ENCODE measurements at regions of chr7 and their contacts with region 1.

Region 1: DNA sequence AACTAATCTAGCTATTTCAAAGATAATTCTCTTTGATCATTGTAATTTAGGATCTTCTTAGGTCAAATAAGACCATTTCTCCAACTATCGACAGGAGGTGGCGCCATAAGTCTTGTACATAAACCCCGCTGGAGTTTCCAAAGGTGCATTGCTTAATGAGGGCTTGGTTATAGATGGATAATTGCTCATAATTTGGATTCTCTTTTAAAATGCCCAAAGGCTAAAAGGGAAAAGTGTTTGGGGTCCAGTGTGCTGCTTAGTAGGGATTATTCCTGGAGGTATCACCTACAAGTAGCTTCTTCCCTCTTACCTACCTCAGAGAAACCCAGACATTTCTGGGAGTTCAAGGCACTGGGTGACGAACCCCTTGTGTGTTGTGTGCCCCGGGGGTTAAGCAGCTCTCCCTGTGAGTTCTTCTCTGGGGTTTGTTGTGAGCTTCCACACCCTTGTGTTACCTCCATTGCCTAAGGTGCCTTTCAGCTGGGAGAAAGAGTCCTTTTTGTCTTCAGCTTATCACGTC is 75.2 kb downstream of the PAXIP1 start:
- DNase-seq: peak; percentile 53 to 90 (median 80)
- ATAC-seq: peak; percentile 57
- H3K4me3 ChIP-seq: peak overlapping the region; percentile 74 to 78
- H3K4me3 Mint-ChIP-seq: peak overlapping the region; percentile 95
- H3K27ac ChIP-seq: peak overlapping the region; percentile 84 to 92
- H3K27ac Mint-ChIP-seq: peak overlapping the region; percentile 99
- H3K4me1 ChIP-seq: peaks cover 15% of the 10 kb centered on the region
- H3K4me1 Mint-ChIP-seq: peaks cover 35% of the 10 kb centered on the region
- H3K27me3 ChIP-seq: no peaks in the 10 kb centered on the region
- H3K27me3 Mint-ChIP-seq: no peaks in the 10 kb centered on the region
- CTCF ChIP-seq: peak; percentile 79

Region 2: DNA sequence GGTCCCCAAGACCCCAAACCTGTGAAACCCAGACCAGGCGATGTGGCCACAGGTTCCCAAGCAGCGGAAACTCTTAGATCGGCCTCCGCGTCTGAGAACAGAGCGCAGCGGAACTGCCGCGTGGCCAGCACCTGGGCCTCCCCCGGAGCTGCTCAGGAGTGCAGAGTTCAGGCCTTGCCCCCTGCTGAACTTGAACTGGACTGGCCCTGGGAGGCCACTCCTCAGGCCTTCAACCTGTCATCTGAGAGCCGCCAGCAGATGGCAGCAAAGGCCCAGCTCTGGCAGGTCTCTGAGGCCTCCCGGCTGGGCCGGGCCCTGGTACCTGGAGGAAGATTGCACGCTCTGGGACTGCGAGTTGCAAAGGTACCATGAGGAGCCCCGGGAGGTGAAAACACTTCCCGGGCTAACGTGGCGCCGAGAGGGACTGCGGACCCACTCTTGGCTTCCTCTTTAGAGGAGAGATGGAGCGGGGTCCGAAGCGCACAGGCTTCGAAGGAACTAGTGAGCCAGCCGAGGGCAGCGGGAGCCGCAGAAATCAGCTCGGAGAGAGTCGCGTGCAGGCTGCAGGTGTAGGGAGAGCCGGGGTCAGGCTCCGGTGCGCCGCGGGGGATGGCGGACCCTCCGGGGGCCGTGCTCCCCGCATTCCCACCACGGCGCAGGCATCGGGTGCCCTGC is 13.9 kb before region 1 on chr7:
- CTCF ChIA-PET with region 1: interaction called, 40 read pairs
- POLR2A ChIA-PET with region 1: interaction called, 4 read pairs
- intact Hi-C with region 1: loop called in 1 of 2 experiments (anchors 1 kb)
- DNase-seq: peak; percentile 77 to 93 (median 86)
- ATAC-seq: peak; percentile 95
- H3K4me3 ChIP-seq: peak overlapping the region; percentile 34 to 37
- H3K4me3 Mint-ChIP-seq: peak overlapping the region; percentile 86
- H3K27ac ChIP-seq: no peak overlapping the region
- H3K27ac Mint-ChIP-seq: no peak overlapping the region
- H3K4me1 ChIP-seq: no peaks in the 10 kb centered on the region
- H3K4me1 Mint-ChIP-seq: peaks cover 3% of the 10 kb centered on the region
- H3K27me3 ChIP-seq: no peaks in the 10 kb centered on the region
- H3K27me3 Mint-ChIP-seq: peaks cover 29% of the 10 kb centered on the region
- CTCF ChIP-seq: peak; percentile 91

Region 3: DNA sequence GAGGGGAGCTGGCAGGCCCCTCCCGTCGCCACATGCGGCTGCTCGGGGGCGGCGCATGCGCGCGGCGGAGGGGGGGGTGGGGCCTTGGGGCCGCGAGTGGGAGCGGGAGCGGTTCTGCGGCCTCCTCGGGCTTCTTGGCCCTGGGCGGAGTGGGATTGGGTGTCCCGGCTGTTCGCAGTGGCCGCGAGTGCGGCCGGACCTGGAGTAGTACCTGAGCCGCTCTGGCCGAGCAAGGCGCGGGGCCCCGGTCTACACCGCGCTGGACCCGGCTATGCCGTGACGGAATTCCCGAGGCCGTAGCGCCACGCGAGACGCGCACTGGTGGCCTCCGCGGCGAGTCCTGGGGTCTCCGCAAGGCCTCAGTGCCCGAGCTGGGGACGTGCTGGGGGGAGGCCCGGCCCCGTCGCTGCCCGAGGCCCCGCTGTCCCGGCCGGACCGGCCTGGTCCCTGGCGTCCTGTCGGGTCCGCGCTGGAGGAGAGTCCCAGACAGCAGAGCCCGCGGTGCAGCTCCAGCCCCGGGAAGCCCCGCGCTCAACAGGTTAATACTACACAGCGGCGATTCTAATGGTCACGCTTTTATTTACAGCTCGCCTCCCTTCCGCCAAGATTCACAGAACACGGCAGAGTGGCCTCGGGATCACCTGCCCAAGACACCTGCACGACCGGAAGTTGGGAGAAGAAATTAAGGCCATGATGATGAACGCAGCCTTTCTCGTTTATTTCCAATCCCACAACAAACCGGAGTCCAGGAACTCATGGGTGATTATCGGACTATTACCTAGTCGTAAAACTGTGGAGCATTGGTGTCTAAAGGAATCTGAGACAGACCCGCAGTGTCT is 75.9 kb after region 1 on chr7:
- CTCF ChIA-PET with region 1: interaction called, 21 read pairs
- POLR2A ChIA-PET with region 1: interaction called, 8 read pairs
- intact Hi-C with region 1: loop called (anchors 1 kb)
- DNase-seq: peak; percentile 73 to 91 (median 86)
- ATAC-seq: peak; percentile 89
- H3K4me3 ChIP-seq: peak overlapping the region; percentile 92 to 93
- H3K4me3 Mint-ChIP-seq: peak overlapping the region; percentile 93
- H3K27ac ChIP-seq: peak overlapping the region; percentile 69 to 72
- H3K27ac Mint-ChIP-seq: peak overlapping the region; percentile 93
- H3K4me1 ChIP-seq: peaks cover 11% of the 10 kb centered on the region
- H3K4me1 Mint-ChIP-seq: peaks cover 24% of the 10 kb centered on the region
- H3K27me3 ChIP-seq: no peaks in the 10 kb centered on the region
- H3K27me3 Mint-ChIP-seq: no peaks in the 10 kb centered on the region
- CTCF ChIP-seq: no peak

Region 4: GRCh38 chr7:155205368-155206317 is 278.0 kb after region 1 on chr7:
- CTCF ChIA-PET with region 1: no interaction called
- POLR2A ChIA-PET with region 1: no interaction called
- intact Hi-C with region 1: loop called (anchors 1 kb)
- DNase-seq: peak; percentile 71 to 97 (median 81)
- ATAC-seq: peak; percentile 90
- H3K4me3 ChIP-seq: peak overlapping the region; percentile 59 to 65
- H3K4me3 Mint-ChIP-seq: peak overlapping the region; percentile 80
- H3K27ac ChIP-seq: peak overlapping the region; percentile 59 to 94
- H3K27ac Mint-ChIP-seq: peak overlapping the region; percentile 94
- H3K4me1 ChIP-seq: peaks cover 14% of the 10 kb centered on the region
- H3K4me1 Mint-ChIP-seq: peaks cover 22% of the 10 kb centered on the region
- H3K27me3 ChIP-seq: no peaks in the 10 kb centered on the region
- H3K27me3 Mint-ChIP-seq: no peaks in the 10 kb centered on the region
- CTCF ChIP-seq: no peak

Region 5: GRCh38 chr7:155524018-155524616 is 596.4 kb after region 1 on chr7:
- CTCF ChIA-PET with region 1: no interaction called
- POLR2A ChIA-PET with region 1: no interaction called
- intact Hi-C with region 1: loop called in 1 of 2 experiments (anchors 5 kb)
- DNase-seq: peak in 1 of 9 experiments; percentile 17
- ATAC-seq: no peak
- H3K4me3 ChIP-seq: no peak overlapping the region
- H3K4me3 Mint-ChIP-seq: no peak overlapping the region
- H3K27ac ChIP-seq: no peak overlapping the region
- H3K27ac Mint-ChIP-seq: no peak overlapping the region
- H3K4me1 ChIP-seq: no peaks in the 10 kb centered on the region
- H3K4me1 Mint-ChIP-seq: no peaks in the 10 kb centered on the region
- H3K27me3 ChIP-seq: peaks cover 0 to 3% of the 10 kb centered on the region in 2 experiments
- H3K27me3 Mint-ChIP-seq: peaks cover 13% of the 10 kb centered on the region
- CTCF ChIP-seq: no peak

Region 6: GRCh38 chr7:155763691-155764437 is 836.2 kb after region 1 on chr7:
- CTCF ChIA-PET with region 1: no interaction called
- POLR2A ChIA-PET with region 1: no interaction called
- intact Hi-C with region 1: loop called (anchors 1 kb)
- DNase-seq: peak in 8 of 9 experiments; percentile 23 to 80 (median 60)
- ATAC-seq: peak; percentile 80
- H3K4me3 ChIP-seq: peak overlapping the region in 1 of 2 experiments; percentile 28
- H3K4me3 Mint-ChIP-seq: peak overlapping the region; percentile 78
- H3K27ac ChIP-seq: peak overlapping the region; percentile 26 to 86
- H3K27ac Mint-ChIP-seq: peak overlapping the region; percentile 91
- H3K4me1 ChIP-seq: peaks cover 31% of the 10 kb centered on the region
- H3K4me1 Mint-ChIP-seq: peaks cover 54% of the 10 kb centered on the region
- H3K27me3 ChIP-seq: no peaks in the 10 kb centered on the region
- H3K27me3 Mint-ChIP-seq: no peaks in the 10 kb centered on the region
- CTCF ChIP-seq: no peak